ENCODE measurements at regions of chr3 and their contacts with region 1.

Region 1: GRCh38 chr3:5122030-5122740 is at the start of gene ARL8B:
- DNase-seq: peak; percentile 95
- CTCF ChIP-seq: peak; percentile 98

Region 2: DNA sequence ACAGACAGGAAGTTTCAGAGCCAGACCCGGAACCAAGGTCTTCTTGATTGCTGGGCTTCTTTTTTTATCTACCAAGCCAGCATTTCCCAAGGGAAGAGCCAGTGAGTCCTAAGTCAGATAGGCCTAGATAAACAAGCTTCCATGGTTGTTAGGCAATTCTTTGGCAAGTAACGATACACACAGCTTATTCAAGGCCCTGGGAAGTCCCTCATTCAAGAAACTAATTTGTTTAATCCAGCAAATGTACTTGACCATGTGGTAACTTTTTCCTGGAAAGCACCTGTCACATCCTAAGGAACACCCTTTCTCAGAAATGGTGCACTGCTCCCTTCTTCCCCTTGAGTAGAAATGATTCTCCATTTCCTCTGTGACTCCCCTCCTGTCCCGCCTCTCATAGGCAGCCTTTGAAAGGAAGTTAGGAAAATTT is 419.1 kb before region 1 on chr3:
- CTCF ChIA-PET with region 1: no interaction called
- POLR2A ChIA-PET with region 1: no interaction called
- DNase-seq: no peak
- CTCF ChIP-seq: no peak

Region 3: DNA sequence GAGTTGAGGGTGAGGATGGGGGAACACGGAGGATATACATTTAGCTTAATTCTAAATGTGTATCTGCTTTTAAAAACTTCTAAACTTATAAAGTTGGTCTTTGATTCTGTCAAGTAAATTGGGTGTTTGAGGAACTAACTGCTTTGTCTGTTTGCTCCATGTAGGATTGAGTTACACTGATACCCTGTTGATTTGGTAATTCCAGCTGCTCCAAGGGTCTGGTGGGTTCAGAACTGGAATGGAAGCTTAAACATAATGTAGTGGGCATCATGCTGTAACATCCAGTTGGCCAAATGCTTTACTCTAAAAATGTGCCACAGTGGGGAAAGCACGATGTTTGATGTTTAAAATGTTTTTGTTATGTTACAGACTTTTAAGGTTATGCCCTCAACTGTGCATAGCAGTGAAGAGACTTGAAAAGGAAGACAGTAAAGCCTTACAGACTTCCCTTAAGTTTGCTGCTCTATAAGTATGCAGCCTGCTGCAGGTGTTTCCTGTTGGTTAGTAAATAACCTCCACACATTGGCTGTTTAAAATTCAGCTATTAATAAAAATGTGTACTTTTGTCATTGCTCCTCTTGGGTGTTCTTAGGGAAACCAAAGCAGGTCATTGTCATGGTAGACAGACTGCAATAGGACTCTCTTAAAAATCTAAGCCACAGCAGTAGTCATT is 59.4 kb after region 1 on chr3:
- CTCF ChIA-PET with region 1: interaction called, 23 read pairs
- POLR2A ChIA-PET with region 1: interaction called, 4 read pairs
- DNase-seq: peak; percentile 40
- CTCF ChIP-seq: no peak

Region 4: GRCh38 chr3:5187156-5187919 is 65.2 kb after region 1 on chr3 and contains the start of gene EDEM1:
- CTCF ChIA-PET with region 1: interaction called, 23 read pairs
- POLR2A ChIA-PET with region 1: interaction called, 4 read pairs
- DNase-seq: peak; percentile 98
- CTCF ChIP-seq: no peak

Region 5: GRCh38 chr3:5194341-5195159 is 72.4 kb after region 1 on chr3:
- CTCF ChIA-PET with region 1: interaction called, 41 read pairs
- POLR2A ChIA-PET with region 1: interaction called, 3 read pairs
- DNase-seq: no peak
- CTCF ChIP-seq: no peak

Region 6: DNA sequence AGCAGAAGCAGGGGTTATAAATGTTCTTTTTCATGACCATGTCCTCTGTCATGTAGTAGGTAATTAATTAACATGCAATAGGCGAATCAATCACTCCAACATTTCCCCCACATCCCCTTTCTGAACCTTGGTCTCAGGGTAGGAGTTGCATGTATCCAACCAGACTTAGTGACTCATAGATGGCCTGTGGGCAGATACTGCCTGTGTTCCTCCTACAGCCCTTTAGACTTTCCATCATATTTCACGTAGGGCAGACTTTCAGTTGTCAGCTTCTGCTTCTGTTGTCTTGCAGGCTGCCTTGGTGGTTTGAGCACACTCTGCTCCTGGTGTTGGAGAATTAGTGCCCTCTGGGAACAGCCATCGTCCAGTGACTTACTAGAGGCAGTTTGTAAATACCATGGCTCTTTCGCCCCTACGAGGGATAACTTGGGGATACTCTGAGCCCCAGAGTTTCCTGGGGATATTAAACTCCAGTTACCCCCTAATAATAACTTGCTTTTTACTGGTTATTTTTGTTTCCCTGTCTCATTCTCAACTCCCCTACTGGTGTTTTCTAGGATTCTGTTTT is 309.7 kb after region 1 on chr3:
- CTCF ChIA-PET with region 1: no interaction called
- POLR2A ChIA-PET with region 1: no interaction called
- DNase-seq: no peak
- CTCF ChIP-seq: no peak